HEK293 (cell line): ENCODE measurements at regions of chr4 and their contacts with region 1.

Region 1: DNA sequence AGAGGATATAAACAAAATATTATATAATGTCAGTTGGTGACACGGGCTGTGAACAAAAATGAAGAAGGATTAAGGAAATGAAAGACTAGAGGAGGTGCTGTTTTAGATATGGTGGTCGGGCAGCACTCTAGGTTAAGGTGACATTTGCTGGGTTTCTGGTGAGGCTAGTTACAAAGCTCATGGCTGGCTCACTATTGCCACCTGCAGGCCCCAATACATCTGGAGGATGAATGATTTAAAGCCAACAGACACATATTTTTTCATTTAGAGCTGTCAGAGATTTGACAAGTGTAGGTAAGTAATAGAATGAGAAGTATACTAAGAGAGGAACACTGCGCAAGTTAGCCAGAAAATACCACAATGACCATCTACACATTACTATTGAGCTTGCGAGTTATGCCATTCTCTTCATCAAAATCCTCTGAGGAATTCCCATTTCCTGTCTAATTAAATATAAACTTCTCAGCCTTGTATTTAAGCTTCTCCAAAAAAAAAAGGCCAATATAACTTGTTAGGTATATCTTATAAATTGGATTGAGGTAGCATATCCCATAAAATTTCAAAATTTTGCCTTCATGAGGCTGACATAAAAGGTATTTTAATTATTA is 6.4 kb upstream of the FGG start:
- H3K4me3 ChIP-seq: no peak overlapping the region
- H3K27ac ChIP-seq: no peak overlapping the region
- H3K4me1 ChIP-seq: no peaks in the 10 kb centered on the region
- CTCF ChIP-seq: no peak

Region 2: DNA sequence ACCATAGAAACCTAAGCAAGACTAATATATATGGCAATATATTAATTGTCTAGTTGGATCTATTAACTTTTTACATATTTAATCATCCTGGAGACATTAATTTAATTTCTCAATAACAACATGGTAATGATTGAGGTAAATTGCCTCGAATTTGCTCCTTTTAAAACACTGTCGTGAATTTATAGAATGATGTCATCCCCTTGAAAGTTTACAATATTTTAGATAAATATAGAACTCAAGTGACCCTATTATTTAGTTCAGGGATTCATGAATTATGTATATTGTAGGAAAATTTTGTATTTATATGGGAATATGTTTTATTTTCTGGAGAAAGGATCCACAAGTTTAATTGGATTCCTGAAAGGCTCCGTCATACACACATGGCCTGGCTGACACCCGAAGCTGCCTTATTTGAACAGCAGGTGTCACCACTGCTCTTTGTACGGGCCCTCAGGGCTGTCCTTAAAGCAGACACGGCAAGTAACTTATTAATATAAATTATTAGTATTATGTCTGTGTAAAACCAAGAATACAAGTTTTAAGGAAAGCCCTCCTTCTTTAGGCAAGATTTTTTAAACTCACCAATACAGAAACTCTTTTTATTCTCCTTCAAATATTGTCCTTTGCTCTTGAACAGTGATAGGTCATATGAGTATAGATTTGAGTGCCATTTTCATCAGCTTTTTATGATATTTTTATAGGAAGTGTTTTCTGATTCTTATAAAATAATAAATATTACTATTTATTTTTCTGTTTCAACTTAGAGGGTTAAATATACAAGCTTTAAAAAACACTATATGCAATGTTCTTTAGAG is 66.7 kb before region 1 on chr4:
- CTCF ChIA-PET with region 1: interaction called, 429 read pairs
- POLR2A ChIA-PET with region 1: interaction called, 3 read pairs
- H3K4me3 ChIP-seq: no peak overlapping the region
- H3K27ac ChIP-seq: no peak overlapping the region
- H3K4me1 ChIP-seq: peaks cover 2% of the 10 kb centered on the region
- CTCF ChIP-seq: no peak